Activated B cell treated with CpG ODN at 0.5 μM for 24 hours (primary cell): ENCODE measurements at regions of chr20 and their contacts with region 1.

Region 1: DNA sequence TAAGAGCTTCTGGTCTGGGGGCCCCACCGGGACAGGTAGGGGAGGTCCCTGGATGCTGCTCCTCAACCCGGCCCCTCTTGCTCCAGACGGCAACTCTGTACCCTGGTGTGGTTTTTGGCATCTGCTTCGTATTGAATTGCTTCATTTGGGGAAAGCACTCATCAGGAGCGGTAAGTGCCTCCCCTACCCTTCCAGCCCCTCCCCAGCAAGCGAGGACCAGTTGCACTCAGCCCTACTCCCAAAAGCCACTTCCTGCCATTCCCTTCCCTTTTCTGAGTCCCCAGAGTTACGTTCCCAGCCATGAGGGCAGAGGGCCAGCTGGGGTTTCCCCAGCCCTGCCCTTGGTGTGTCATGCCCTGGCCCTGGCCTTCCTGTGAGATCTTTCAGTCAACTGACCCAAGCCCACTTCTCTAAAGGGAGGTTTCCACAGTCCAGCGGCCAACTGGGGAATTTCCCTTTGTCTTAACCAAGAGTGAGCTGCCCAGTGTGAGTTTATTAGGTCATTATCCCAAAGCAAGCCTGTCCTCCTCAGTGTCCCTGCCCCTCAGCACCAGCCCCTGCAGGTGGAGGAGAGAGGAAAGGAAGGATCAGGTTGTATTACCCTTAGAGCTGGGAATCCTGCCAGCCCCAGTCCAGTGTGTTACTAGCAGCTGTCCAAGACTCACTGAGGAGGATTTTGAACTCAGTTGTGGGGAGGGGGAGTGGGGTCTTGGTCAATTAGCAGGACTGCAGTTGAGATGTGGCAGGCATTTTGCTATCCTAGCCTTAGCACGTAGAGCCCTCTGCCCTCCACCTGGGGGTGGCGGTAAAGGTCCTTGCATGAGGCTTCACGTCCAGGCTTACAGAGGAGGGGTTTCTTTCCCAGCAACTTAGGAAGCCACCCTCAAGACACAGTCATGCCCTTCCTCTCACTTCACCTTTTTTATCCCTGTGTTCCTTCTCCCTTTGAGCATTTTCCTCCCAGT is 45.8 kb downstream of the TM9SF4 start:
- DNase-seq: no peak
- ATAC-seq: peak; percentile 21
- H3K4me3 Mint-ChIP-seq: no peak overlapping the region
- H3K27ac Mint-ChIP-seq: peak overlapping the region; percentile 30
- H3K4me1 Mint-ChIP-seq: peaks cover 5% of the 10 kb centered on the region
- H3K27me3 Mint-ChIP-seq: no peaks in the 10 kb centered on the region
- CTCF ChIP-seq: no peak

Region 2: GRCh38 chr20:32336918-32337347 is 181.6 kb after region 1 on chr20:
- CTCF ChIA-PET with region 1: no interaction called
- POLR2A ChIA-PET with region 1: no interaction called
- intact Hi-C with region 1: no loop called
- DNase-seq: no peak
- ATAC-seq: peak; percentile 64
- H3K4me3 Mint-ChIP-seq: no peak overlapping the region
- H3K27ac Mint-ChIP-seq: peak overlapping the region; percentile 66
- H3K4me1 Mint-ChIP-seq: peaks cover 47% of the 10 kb centered on the region
- H3K27me3 Mint-ChIP-seq: no peaks in the 10 kb centered on the region
- CTCF ChIP-seq: peak; percentile 55

Region 3: DNA sequence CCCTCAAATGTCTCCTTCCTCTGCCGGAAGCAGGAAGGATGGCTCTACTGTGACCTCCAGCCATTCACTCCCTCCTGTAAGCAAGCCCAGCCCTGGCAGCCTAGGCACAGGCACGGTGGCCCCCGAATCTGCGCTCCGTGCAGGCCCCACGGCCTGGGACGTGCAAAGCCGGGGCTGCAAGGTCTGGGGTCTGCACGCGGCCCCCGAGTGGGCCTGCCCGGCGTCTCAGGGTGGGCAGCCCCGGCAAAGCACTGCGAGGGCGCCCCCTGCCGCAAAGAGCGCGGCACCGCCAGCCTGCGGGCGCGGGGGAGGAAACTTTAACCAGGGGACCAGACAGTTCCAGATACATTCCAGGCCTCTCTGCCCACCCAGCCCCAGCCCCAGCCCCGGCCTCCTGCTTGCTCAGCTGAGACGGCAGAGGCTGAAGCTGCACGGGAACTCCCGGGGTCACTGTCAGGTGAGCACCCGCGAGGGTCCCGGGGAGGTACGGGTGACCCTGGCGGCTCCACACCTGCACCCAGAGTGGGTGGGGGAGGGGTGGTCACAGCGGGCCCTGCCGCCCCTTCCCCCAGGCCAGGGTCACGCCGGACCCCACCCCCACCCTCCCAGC is 301.7 kb after region 1 on chr20:
- CTCF ChIA-PET with region 1: no interaction called
- POLR2A ChIA-PET with region 1: no interaction called
- intact Hi-C with region 1: loop called (anchors 1 kb)
- DNase-seq: peak; percentile 52
- ATAC-seq: peak; percentile 66
- H3K4me3 Mint-ChIP-seq: no peak overlapping the region
- H3K27ac Mint-ChIP-seq: no peak overlapping the region
- H3K4me1 Mint-ChIP-seq: peaks cover 13% of the 10 kb centered on the region
- H3K27me3 Mint-ChIP-seq: no peaks in the 10 kb centered on the region
- CTCF ChIP-seq: no peak